ENCODE measurements at regions of chr17 and their contacts with region 1.

Region 1: GRCh38 chr17:2571523-2572303 is 21.7 kb upstream of the PAFAH1B1 start:
- DNase-seq: no peak
- ATAC-seq: no peak
- H3K4me3 ChIP-seq: no peak overlapping the region
- H3K27ac ChIP-seq: no peak overlapping the region
- H3K4me1 ChIP-seq: no peaks in the 10 kb centered on the region
- H3K27me3 ChIP-seq: peaks cover 0 to 5% (median 0%) of the 10 kb centered on the region in 7 donors
- CTCF ChIP-seq: no peak

Region 2: DNA sequence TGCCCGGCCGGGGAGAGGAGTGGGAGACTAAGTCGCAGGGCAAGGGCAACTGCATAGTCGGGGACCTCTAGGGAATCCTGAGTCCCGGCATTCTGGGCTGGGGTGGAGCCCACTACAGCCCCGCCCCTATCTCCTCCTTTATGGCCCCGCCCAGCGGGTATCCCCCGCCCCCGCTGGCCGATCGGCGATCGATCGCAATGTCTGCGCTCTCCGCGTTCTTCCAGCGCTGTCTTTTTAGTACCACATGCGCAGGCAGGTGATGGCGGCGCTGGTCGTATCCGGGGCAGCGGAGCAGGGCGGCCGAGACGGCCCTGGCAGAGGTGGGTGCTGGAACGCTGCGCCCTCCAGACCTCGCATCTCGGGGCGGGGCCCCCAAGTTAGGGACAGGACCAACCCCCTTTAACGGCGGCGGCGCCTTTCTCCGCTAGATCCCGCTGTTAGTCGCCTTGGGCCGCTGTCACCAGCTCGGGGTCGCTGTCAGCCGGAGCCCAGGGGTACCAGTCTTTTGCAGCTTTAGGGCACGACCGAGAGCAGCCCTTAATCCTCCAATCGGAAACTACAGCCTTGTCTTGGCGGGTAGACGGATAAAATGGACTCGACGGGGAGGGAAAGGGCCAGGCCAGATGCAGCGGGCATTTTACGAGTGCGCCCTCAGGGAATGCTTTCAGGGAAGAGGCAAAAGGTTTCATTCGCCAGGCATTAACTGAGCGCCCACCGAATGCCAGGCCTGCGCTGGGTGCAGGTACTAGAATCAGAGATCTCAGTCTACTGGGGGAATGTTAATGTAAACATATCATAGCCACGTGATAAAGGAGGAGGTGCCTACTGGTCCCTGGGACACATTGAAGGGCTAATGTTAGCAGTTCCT is 541.6 kb before region 1 on chr17 and contains the start of gene DPH1:
- intact Hi-C with region 1: no loop called
- DNase-seq: peak; percentile 90
- ATAC-seq: peak; percentile 84 to 95 (median 89)
- H3K4me3 ChIP-seq: peak within 1 kb of the TSS; percentile 74 to 99 (median 95)
- H3K27ac ChIP-seq: peak within 1 kb of the TSS in 9 of 10 donors; percentile 23 to 84 (median 72)
- H3K4me1 ChIP-seq: peaks cover 10 to 43% (median 29%) of the 10 kb centered on the region in 9 donors
- H3K27me3 ChIP-seq: peaks cover 0 to 46% (median 19%) of the 10 kb centered on the region in 7 donors
- CTCF ChIP-seq: no peak
- total RNA-seq, gene DPH1: 22.8 to 40.0 (median 25.9) TPM

Region 3: GRCh38 chr17:2511138-2511461 is 60.6 kb before region 1 on chr17:
- intact Hi-C with region 1: no loop called
- DNase-seq: no peak
- ATAC-seq: peak in 1 of 8 donors; percentile 2
- H3K4me3 ChIP-seq: peak overlapping the region; percentile 56 to 99 (median 72)
- H3K27ac ChIP-seq: peak overlapping the region; percentile 69 to 97 (median 88)
- H3K4me1 ChIP-seq: peaks cover 4 to 38% (median 28%) of the 10 kb centered on the region in 9 donors
- H3K27me3 ChIP-seq: no peaks in the 10 kb centered on the region
- CTCF ChIP-seq: no peak

Region 4: DNA sequence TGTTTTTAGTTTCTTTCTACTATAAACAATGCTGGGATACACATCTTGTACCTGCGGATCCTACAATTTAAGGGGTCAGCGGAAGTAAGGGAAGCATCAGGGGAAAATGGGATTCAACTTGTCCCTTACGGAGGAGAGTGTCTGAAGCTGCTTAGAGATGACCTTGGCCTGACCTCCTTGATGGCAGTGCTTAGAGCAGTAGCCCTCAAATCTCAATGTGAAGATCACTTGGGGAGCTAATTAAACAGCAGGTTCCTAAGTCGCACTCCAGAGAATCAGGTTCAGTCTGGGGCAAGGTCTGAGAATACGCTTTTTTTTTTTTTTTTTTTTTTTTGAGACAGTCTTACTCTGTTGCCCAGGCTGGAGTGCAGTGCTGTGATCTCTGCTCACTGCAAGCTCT is 50.5 kb before region 1 on chr17:
- intact Hi-C with region 1: loop called in 1 of 10 experiments (anchors 10 kb)
- DNase-seq: no peak
- ATAC-seq: no peak
- H3K4me3 ChIP-seq: no peak overlapping the region
- H3K27ac ChIP-seq: no peak overlapping the region
- H3K4me1 ChIP-seq: peaks cover 0 to 6% (median 0%) of the 10 kb centered on the region in 9 donors
- H3K27me3 ChIP-seq: no peaks in the 10 kb centered on the region
- CTCF ChIP-seq: no peak

Region 5: GRCh38 chr17:2624292-2624731 is 52.6 kb after region 1 on chr17:
- intact Hi-C with region 1: no loop called
- DNase-seq: no peak
- ATAC-seq: no peak
- H3K4me3 ChIP-seq: no peak overlapping the region
- H3K27ac ChIP-seq: peak overlapping the region in 1 of 10 donors; percentile 46
- H3K4me1 ChIP-seq: peaks cover 2 to 73% (median 30%) of the 10 kb centered on the region in 9 donors
- H3K27me3 ChIP-seq: no peaks in the 10 kb centered on the region
- CTCF ChIP-seq: no peak

Region 6: GRCh38 chr17:2644971-2645370 is 73.3 kb after region 1 on chr17:
- intact Hi-C with region 1: no loop called
- DNase-seq: no peak
- ATAC-seq: no peak
- H3K4me3 ChIP-seq: no peak overlapping the region
- H3K27ac ChIP-seq: no peak overlapping the region
- H3K4me1 ChIP-seq: peaks cover 0 to 20% (median 0%) of the 10 kb centered on the region in 9 donors
- H3K27me3 ChIP-seq: no peaks in the 10 kb centered on the region
- CTCF ChIP-seq: no peak